Activated CD4-positive, alpha-beta memory T cell treated with anti-CD3 and anti-CD28 coated beads for 36 hours (primary cell): ENCODE measurements at regions of chr6 and their contacts with region 1.

Region 1: GRCh38 chr6:34154668-34155447 is 9.0 kb upstream of the GRM4 start:
- DNase-seq: peak; percentile 73
- H3K4me3 Mint-ChIP-seq: no peak overlapping the region
- H3K27ac Mint-ChIP-seq: no peak overlapping the region
- H3K4me1 Mint-ChIP-seq: peaks cover 7% of the 10 kb centered on the region
- H3K27me3 Mint-ChIP-seq: peaks cover 42% of the 10 kb centered on the region

Region 2: GRCh38 chr6:33744001-33744848 is 410.6 kb before region 1 on chr6:
- CTCF ChIA-PET with region 1: interaction called, 10 read pairs
- POLR2A ChIA-PET with region 1: no interaction called
- intact Hi-C with region 1: no loop called
- DNase-seq: peak; percentile 82
- H3K4me3 Mint-ChIP-seq: no peak overlapping the region
- H3K27ac Mint-ChIP-seq: no peak overlapping the region
- H3K4me1 Mint-ChIP-seq: peaks cover 2% of the 10 kb centered on the region
- H3K27me3 Mint-ChIP-seq: peaks cover 7% of the 10 kb centered on the region

Region 3: GRCh38 chr6:34055223-34055933 is 99.5 kb before region 1 on chr6:
- CTCF ChIA-PET with region 1: interaction called, 113 read pairs
- POLR2A ChIA-PET with region 1: no interaction called
- intact Hi-C with region 1: loop called (anchors 1 kb)
- DNase-seq: peak; percentile 75
- H3K4me3 Mint-ChIP-seq: no peak overlapping the region
- H3K27ac Mint-ChIP-seq: no peak overlapping the region
- H3K4me1 Mint-ChIP-seq: no peaks in the 10 kb centered on the region
- H3K27me3 Mint-ChIP-seq: no peaks in the 10 kb centered on the region

Region 4: GRCh38 chr6:34468378-34468892 is 313.6 kb after region 1 on chr6:
- CTCF ChIA-PET with region 1: no interaction called
- POLR2A ChIA-PET with region 1: no interaction called
- intact Hi-C with region 1: no loop called
- DNase-seq: no peak
- H3K4me3 Mint-ChIP-seq: no peak overlapping the region
- H3K27ac Mint-ChIP-seq: no peak overlapping the region
- H3K4me1 Mint-ChIP-seq: peaks cover 5% of the 10 kb centered on the region
- H3K27me3 Mint-ChIP-seq: peaks cover 29% of the 10 kb centered on the region